OCI-LY7 (cell line): ENCODE measurements at regions of chr16 and their contacts with region 1.

Region 1: DNA sequence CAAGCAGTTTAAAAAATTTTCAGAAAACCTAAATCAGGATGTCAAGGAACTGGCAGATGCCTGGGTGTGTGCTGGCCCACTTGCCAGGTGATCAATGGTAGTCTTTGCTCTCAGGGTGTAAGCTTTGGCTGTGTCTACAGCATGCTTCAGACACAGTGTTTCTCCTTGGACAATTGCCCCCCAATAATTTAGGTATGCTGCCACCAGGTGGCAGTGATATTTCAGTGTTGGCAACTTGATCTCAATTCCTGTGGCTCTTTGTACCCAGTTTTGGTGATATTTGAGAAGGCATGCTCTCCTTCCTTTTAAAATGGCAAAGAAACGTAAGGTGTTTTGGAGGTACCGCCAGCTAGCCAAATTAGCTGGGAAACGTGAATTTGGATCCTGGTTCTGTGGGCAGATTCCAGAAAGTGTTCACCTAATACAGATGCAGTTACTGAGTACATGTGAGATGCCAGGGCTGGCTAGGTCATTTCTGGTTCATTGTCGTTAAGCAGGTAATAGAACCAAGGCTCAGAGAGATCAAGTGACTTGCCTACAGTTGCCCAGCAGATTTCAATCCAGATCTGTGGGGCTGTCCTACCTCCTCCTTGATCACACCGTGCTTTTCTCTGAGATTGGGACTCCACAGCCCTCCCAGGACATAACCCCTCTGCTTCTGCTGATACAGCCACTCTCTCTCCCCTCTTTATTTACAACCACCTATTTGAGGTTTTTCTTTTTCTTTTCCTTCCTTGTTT is 155.6 kb upstream of the PLCG2 start:
- DNase-seq: peak; percentile 72
- H3K4me3 ChIP-seq: no peak overlapping the region
- H3K27ac ChIP-seq: no peak overlapping the region
- H3K4me1 ChIP-seq: no peaks in the 10 kb centered on the region
- CTCF ChIP-seq: peak; percentile 90

Region 2: GRCh38 chr16:81384006-81384405 is 239.5 kb before region 1 on chr16:
- CTCF ChIA-PET with region 1: no interaction called
- POLR2A ChIA-PET with region 1: no interaction called
- intact Hi-C with region 1: no loop called
- DNase-seq: no peak
- H3K4me3 ChIP-seq: no peak overlapping the region
- H3K27ac ChIP-seq: no peak overlapping the region
- H3K4me1 ChIP-seq: no peaks in the 10 kb centered on the region
- CTCF ChIP-seq: no peak

Region 3: DNA sequence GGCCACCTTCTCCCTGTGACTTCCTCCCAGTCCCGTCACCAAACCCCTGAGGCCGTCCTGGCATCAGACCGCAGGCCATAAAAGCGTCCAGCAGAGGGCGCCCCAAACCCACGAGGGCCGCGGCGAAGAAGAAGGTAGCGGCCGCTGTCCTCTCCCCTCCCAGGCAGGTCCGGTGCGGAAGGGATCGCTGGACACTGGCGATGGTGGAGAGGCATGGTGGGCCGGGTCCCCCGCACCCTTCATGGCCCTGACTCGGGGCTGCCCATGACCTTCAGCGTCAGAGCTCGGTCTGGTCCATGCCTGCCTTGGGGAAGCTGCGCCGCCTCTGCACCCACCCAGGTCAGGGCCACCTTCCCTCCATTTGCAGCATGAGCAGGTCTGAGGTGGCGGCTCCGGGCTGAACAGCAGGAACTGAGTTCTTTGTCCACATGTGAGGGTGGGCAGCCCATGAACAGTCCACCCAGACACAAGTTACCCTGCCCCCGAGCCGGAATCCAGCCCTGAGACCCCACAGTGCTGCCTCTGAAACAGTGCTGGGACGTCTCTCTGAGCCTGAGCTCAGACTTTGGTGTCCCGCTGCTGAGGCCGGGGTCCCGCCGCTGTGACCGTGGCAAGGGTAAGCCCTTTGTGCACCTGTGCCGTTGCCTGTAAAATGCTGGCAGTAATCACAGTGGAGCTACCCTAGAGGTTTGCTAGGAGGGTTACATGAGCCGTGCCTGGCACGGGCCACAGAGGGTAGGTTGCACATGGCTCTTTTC is 219.7 kb before region 1 on chr16:
- CTCF ChIA-PET with region 1: no interaction called
- POLR2A ChIA-PET with region 1: no interaction called
- intact Hi-C with region 1: loop called (anchors 1 kb)
- DNase-seq: peak; percentile 86
- H3K4me3 ChIP-seq: peak overlapping the region; percentile 55
- H3K27ac ChIP-seq: no peak overlapping the region
- H3K4me1 ChIP-seq: peaks cover 10% of the 10 kb centered on the region
- CTCF ChIP-seq: peak; percentile 92

Region 4: DNA sequence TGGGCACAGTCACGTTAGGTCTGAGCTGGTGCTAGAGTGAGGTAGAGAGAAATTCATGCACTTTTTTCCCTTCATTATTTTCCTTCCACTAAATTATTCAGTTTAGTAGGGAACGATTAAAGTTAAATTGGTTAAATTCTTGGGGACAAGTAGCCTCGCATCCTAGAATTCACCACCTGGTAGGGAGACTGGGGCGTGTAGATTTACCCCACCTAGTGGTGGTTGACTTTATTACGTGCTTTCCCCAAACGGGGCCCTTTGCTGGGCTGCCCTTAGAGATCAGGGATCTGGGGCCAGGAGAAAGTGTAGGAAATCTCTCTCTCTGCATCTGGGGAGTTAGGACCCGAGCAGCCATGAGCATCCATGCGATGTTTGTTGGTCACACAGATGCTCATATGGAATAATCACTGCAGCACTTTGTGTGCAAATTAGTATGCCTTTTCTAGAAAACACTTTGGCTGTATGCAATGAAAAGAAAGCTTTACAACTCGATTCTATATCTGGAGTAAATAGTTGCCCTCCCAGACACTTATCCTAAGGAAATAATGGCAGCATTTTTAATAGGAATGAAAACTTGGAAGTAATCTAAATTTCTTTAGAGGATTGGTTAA is 262.5 kb after region 1 on chr16:
- CTCF ChIA-PET with region 1: no interaction called
- POLR2A ChIA-PET with region 1: no interaction called
- intact Hi-C with region 1: loop called (anchors 10 kb)
- DNase-seq: peak; percentile 67
- H3K4me3 ChIP-seq: no peak overlapping the region
- H3K27ac ChIP-seq: peak overlapping the region; percentile 7
- H3K4me1 ChIP-seq: peaks cover 5% of the 10 kb centered on the region
- CTCF ChIP-seq: peak; percentile 93